Endothelial cell of umbilical vein (primary cell): ENCODE measurements at regions of chr7 and their contacts with region 1.

Region 1: GRCh38 chr7:132580717-132581285 is 4.5 kb upstream of the PLXNA4 start:
- DNase-seq: peak; percentile 78
- H3K4me3 ChIP-seq: no peak overlapping the region
- H3K27ac ChIP-seq: no peak overlapping the region
- H3K4me1 ChIP-seq: peaks cover 7% of the 10 kb centered on the region
- H3K27me3 ChIP-seq: no peaks in the 10 kb centered on the region
- CTCF ChIP-seq: peak; percentile 59 to 76
- POLR2A ChIP-seq: no peak

Region 2: DNA sequence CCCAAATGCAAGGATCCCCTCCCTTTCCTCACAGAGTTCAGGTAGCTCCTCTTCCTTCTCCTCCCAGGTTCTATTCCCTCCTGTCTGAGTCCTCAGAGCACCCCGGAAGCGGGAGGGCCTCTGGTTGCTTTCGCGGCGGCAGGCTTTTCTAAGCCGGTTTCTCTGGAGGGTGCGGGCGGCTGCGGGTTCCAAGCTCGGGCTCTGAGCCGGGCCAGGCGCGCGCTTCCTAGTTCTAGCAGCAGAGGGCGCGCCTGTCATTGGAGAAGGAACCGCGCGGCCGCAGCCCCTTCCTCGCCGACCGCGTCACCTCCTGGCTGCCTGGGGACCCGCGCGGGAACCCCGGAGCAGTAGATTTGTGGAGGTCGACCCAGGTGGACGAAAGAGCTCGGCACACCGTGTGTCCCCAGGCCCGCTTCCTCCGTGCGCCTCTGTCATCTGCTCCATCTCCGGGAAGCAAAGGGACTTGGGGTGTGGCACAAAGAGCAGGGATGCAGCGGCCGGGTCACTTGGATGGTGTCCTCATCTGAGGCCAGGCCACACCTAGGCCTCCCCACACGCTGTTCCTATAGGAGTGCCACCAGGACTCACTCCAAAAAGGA is 635.4 kb before region 1 on chr7:
- CTCF ChIA-PET with region 1: interaction called, 95 read pairs
- POLR2A ChIA-PET with region 1: no interaction called
- dilution Hi-C with region 1: no loop called
- intact Hi-C with region 1: loop called (anchors 1 kb)
- DNase-seq: peak; percentile 46
- H3K4me3 ChIP-seq: no peak overlapping the region
- H3K27ac ChIP-seq: no peak overlapping the region
- H3K4me1 ChIP-seq: peaks cover 9% of the 10 kb centered on the region
- H3K27me3 ChIP-seq: peaks cover 8 to 19% of the 10 kb centered on the region in 2 experiments
- CTCF ChIP-seq: peak; percentile 89 to 93
- POLR2A ChIP-seq: no peak

Region 3: DNA sequence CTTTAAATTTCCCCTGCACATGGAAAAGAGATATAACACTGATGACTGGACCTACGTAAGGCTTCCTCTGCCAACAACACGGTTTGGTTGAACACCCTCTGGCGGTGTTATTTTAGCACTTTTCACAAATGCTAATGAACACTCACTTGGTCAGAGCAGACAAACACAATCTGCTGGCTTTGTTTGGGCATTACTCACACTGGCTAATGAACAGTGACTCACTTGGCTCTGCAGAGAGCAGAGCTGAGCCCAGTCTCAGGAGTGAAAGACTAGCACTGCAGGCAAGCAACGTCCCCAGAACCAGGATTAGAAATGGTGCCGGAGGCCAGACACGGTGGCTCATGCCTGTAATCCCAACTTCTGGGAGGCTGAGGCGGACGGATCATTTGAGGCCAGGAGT is 435.3 kb before region 1 on chr7:
- CTCF ChIA-PET with region 1: interaction called, 10 read pairs
- POLR2A ChIA-PET with region 1: no interaction called
- dilution Hi-C with region 1: no loop called
- intact Hi-C with region 1: loop called (anchors 2 kb)
- DNase-seq: peak; percentile 88
- H3K4me3 ChIP-seq: no peak overlapping the region
- H3K27ac ChIP-seq: peak overlapping the region; percentile 49
- H3K4me1 ChIP-seq: peaks cover 8% of the 10 kb centered on the region
- H3K27me3 ChIP-seq: no peaks in the 10 kb centered on the region
- CTCF ChIP-seq: peak in 1 of 2 donors; percentile 18
- POLR2A ChIP-seq: no peak

Region 4: DNA sequence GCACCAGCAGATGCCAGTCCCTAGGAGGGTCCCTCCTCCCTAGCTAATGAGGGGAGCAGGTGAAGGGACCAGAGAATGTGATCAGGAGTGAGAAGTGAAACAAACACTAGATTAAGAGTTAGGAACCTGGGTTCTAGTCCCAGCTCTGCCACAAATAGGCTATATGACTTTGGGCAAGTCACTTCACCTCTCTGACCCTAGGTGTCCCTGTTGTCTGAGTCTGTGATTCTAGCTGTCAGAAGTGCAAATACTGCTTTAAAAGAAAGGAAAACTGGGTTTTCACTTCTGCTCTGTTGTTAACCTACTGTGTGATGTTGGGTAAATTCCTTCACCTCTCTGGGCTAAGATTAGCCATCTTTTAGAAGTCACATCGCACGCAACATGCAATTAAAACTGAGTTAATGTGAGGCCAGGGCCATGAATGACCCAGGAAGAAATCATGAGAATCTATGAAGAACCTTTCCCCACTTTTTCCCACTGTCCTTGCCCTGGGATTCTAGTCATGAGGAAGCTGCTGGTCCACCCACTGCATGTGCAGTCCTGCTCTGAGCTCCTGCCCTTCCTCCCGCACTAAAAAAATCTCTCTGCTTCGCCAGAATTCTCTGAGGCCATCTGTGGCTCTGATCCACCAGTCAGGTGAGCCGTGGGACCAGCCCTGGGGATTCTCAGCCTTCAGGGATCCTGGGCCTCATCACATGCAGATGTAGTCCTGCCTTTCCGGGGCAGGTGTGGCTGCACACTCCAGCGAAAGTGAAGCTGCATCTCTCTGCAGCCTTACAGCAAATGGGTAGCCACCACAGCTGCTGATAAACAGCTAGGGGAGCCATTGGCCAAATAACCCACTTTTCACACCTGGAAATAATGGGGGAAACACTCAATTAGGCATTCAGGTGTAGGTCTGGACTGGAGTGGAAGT is 186.3 kb before region 1 on chr7:
- CTCF ChIA-PET with region 1: interaction called, 30 read pairs
- POLR2A ChIA-PET with region 1: no interaction called
- dilution Hi-C with region 1: no loop called
- intact Hi-C with region 1: loop called (anchors 1 kb)
- DNase-seq: no peak
- H3K4me3 ChIP-seq: no peak overlapping the region
- H3K27ac ChIP-seq: no peak overlapping the region
- H3K4me1 ChIP-seq: peaks cover 5% of the 10 kb centered on the region
- H3K27me3 ChIP-seq: no peaks in the 10 kb centered on the region
- CTCF ChIP-seq: peak; percentile 5 to 14
- POLR2A ChIP-seq: no peak

Region 5: GRCh38 chr7:133344275-133344674 is 763.5 kb after region 1 on chr7:
- CTCF ChIA-PET with region 1: interaction called, 15 read pairs
- POLR2A ChIA-PET with region 1: no interaction called
- dilution Hi-C with region 1: no loop called
- intact Hi-C with region 1: loop called (anchors 2 kb)
- DNase-seq: peak; percentile 42
- H3K4me3 ChIP-seq: no peak overlapping the region
- H3K27ac ChIP-seq: no peak overlapping the region
- H3K4me1 ChIP-seq: no peaks in the 10 kb centered on the region
- H3K27me3 ChIP-seq: no peaks in the 10 kb centered on the region
- CTCF ChIP-seq: peak; percentile 28 to 34
- POLR2A ChIP-seq: no peak